Vagina (tissue), 2 donors: ENCODE measurements at regions of chr2 and their contacts with region 1.

Region 1: DNA sequence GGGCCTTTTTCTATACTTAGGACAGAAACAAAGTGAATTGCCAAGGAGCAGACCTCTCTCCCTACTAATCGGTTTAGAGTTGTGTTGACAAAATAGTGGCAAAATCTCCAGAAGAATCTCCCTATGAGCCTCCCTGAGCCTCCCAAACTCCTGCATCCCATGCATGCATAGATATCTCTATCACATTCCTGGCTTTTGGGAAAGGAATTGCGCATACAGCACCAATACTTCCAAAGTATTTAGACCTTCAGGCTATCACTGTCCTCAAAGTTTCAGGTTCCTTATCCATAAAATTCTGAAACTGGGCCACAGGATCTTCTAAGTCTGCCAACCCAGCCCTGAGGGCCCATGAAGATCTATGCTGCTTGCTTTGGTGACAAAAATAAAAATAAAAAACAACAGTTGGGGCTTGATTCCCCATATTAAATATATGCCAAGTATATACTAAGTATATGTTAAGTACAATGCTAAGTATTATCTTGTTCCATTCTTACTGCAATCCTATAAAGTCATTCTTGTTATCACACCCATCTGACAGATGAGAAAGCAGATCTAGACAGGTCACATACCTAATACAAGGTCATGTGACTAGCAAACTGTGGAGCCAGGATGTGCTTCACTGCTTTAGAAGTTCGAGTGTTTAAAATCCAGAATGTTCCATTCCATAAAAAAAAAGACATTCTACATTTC is 152.0 kb downstream of the SLC8A1 start:
- DNase-seq: no peak
- H3K4me3 ChIP-seq: no peak overlapping the region
- H3K27ac ChIP-seq: no peak overlapping the region
- H3K4me1 ChIP-seq: no peaks in the 10 kb centered on the region
- H3K27me3 ChIP-seq: no peaks in the 10 kb centered on the region
- CTCF ChIP-seq: no peak
- POLR2A ChIP-seq: no peak

Region 2: GRCh38 chr2:39723946-39724827 is 575.7 kb before region 1 on chr2:
- intact Hi-C with region 1: loop called (anchors 5 kb)
- DNase-seq: no peak
- H3K4me3 ChIP-seq: no peak overlapping the region
- H3K27ac ChIP-seq: no peak overlapping the region
- H3K4me1 ChIP-seq: no peaks in the 10 kb centered on the region
- H3K27me3 ChIP-seq: no peaks in the 10 kb centered on the region
- CTCF ChIP-seq: no peak
- POLR2A ChIP-seq: no peak